Common myeloid progenitor, CD34-positive (primary cell): ENCODE measurements at regions of chr11 and their contacts with region 1.

Region 1: GRCh38 chr11:124900464-124900863 is 2.8 kb upstream of the ROBO4 start:
- DNase-seq: no peak
- H3K4me3 ChIP-seq: no peak overlapping the region
- H3K27ac ChIP-seq: no peak overlapping the region
- H3K4me1 ChIP-seq: peaks cover 0 to 37% (median 29%) of the 10 kb centered on the region in 4 experiments
- H3K27me3 ChIP-seq: no peaks in the 10 kb centered on the region

Region 2: GRCh38 chr11:124855437-124855836 is 45.0 kb before region 1 on chr11:
- CTCF ChIA-PET with region 1: no interaction called
- POLR2A ChIA-PET with region 1: no interaction called
- DNase-seq: no peak
- H3K4me3 ChIP-seq: no peak overlapping the region
- H3K27ac ChIP-seq: no peak overlapping the region
- H3K4me1 ChIP-seq: no peaks in the 10 kb centered on the region
- H3K27me3 ChIP-seq: peaks cover 12 to 66% (median 35%) of the 10 kb centered on the region in 5 experiments

Region 3: DNA sequence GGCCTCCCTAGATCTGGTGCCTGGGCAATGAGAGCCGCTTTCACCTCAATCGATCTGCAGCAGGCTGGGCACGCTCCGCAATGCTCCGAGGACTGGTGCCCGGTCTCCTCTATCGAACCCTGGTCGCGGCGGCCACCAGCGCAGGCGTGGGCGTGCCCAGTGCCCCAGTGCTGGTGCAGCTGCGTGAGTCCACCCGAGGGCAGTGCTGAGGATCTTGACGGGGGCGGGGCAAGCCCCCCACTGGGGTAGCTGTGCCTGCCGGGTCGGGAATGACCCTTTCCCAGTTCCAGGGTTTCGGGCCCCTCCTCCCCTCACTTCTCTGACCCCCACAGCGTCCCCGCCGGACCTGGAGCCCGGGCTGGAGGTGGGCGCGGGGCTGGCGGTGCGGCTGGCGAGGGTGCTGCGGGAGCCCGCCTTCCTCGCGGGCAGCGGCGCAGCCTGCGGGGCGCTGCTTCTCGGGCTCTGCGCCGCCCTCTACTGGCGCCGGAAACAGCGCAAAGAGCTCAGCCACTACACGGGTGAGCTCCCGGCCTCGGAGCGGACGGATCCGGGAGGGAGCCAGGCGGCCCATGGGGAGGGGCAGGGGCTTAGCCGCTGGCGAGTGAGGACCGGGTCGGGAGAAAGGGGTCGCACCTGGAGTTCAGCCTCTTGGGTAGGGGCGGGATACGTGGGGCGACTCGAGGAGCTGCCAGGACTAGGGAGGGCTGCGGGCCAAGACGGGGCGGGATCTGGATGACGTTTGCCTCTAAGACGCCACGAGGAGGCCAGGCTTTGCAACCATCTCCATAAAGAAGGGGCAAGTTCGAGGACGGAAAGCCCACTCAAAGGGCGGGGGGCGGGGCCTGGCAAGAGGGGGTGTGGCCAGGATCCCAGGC is 24.3 kb before region 1 on chr11:
- CTCF ChIA-PET with region 1: interaction called, 39 read pairs
- POLR2A ChIA-PET with region 1: interaction called, 3 read pairs
- DNase-seq: peak; percentile 95 to 98 (median 98)
- H3K4me3 ChIP-seq: peak overlapping the region; percentile 40 to 89 (median 72)
- H3K27ac ChIP-seq: peak overlapping the region in 1 of 2 experiments; percentile 75
- H3K4me1 ChIP-seq: peaks cover 0 to 53% (median 42%) of the 10 kb centered on the region in 4 experiments
- H3K27me3 ChIP-seq: peaks cover 0 to 44% (median 28%) of the 10 kb centered on the region in 5 experiments

Region 4: GRCh38 chr11:124920870-124921609 is 20.6 kb after region 1 on chr11:
- CTCF ChIA-PET with region 1: interaction called, 19 read pairs
- POLR2A ChIA-PET with region 1: no interaction called
- DNase-seq: peak; percentile 86 to 93 (median 92)
- H3K4me3 ChIP-seq: peak overlapping the region in 5 of 7 experiments; percentile 7 to 65 (median 38)
- H3K27ac ChIP-seq: no peak overlapping the region
- H3K4me1 ChIP-seq: peaks cover 0 to 13% (median 11%) of the 10 kb centered on the region in 4 experiments
- H3K27me3 ChIP-seq: peaks cover 0 to 15% (median 9%) of the 10 kb centered on the region in 5 experiments

Region 5: DNA sequence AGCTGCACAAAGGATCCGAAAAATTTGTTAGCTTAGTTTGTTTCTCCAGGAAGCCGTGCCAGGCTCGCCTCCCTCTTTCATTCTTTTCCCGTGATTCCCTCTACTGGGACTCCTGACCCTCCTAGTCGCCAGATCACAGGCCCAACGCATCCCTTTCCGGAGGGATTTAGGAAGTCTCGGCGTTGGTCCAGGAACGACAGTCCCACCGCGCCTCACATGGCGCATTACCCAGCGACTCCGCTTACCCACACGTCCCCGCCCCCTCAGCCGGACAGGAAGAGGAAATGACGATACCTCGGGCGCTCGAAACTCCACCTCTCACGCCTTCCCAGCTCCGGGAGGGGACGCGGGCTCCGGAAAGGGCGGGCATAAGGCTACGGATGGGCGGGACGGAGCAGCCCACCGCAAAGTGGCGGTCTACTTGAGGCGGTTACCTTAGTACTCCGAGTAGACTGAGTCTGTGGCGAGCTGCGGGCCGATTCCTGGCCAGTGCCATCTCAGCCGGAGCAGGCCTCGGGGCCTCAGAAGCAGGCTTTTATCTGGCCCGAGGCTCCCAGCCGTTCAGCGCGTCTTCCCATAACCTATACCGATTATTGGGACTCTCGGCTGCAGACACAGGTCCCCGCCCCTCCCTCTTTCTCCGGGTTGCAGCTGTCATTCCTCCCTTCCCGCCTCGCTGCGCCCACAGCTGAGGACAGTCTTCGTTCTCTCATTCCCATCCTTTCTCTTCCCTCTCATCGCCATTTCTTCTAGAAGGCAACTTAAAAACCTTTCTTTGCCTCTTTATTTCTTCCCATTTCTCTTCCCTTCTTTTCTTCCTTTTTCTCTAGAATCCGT is 53.5 kb after region 1 on chr11 and contains the start of gene CCDC15:
- CTCF ChIA-PET with region 1: interaction called, 11 read pairs
- POLR2A ChIA-PET with region 1: no interaction called
- DNase-seq: peak; percentile 97 to 98 (median 97)
- H3K4me3 ChIP-seq: peak within 1 kb of the TSS; percentile 77 to 93 (median 83)
- H3K27ac ChIP-seq: peak within 1 kb of the TSS; percentile 78 to 89
- H3K4me1 ChIP-seq: peaks cover 3 to 23% (median 15%) of the 10 kb centered on the region in 4 experiments
- H3K27me3 ChIP-seq: no peaks in the 10 kb centered on the region

Region 6: GRCh38 chr11:124970925-124971324 is 70.5 kb after region 1 on chr11:
- CTCF ChIA-PET with region 1: no interaction called
- POLR2A ChIA-PET with region 1: no interaction called
- DNase-seq: no peak
- H3K4me3 ChIP-seq: no peak overlapping the region
- H3K27ac ChIP-seq: no peak overlapping the region
- H3K4me1 ChIP-seq: no peaks in the 10 kb centered on the region
- H3K27me3 ChIP-seq: no peaks in the 10 kb centered on the region

Region 7: DNA sequence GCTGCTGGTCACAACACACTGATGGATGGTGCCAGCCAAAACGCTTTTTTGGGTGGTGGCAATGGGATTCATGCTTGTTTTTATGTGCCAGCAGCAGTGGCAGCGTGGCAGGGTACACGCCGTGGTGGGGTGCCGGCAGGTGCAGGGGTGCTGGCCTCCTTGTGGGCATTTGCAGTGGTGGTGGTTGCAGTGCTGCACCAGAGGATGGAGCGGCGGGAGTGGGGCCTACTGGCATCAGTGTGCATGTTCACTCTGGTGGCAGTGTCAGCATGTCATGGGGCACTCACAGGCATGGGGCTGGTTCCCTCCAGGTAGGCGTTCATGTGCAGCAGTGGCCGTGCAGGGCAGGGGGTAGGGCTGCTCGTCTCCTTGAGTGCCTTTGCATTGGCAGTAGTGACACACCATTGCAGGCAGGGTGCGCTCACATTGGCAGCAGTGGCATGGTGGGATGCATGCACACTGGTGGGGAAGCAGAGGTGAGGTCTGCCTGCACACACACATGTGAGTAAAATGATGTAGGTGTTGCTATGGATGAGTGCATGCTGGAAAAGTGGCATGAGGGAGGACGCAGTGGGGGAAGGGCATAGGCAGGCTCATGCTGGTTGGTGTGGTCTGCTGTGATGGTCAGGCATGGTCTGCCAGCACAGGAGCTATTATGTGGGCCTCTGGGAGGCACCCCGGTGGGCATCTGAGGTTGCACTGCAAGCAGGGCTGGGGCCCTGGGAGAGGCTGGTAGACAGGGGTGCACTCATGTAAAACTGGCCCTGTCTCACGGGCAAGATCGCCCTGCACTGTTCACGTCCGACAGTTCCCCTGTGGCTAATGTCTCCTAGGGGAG is 83.4 kb after region 1 on chr11:
- CTCF ChIA-PET with region 1: no interaction called
- POLR2A ChIA-PET with region 1: no interaction called
- DNase-seq: no peak
- H3K4me3 ChIP-seq: no peak overlapping the region
- H3K27ac ChIP-seq: no peak overlapping the region
- H3K4me1 ChIP-seq: no peaks in the 10 kb centered on the region
- H3K27me3 ChIP-seq: no peaks in the 10 kb centered on the region